ENCODE measurements at regions of chr10 and their contacts with region 1.

Region 1: GRCh38 chr10:63720072-63720537 is 198.9 kb downstream of the REEP3 start:
- DNase-seq: peak; percentile 41
- CTCF ChIP-seq: peak; percentile 85

Region 2: GRCh38 chr10:63157845-63158624 is 562.1 kb before region 1 on chr10:
- CTCF ChIA-PET with region 1: interaction called, 39 read pairs
- POLR2A ChIA-PET with region 1: no interaction called
- DNase-seq: peak; percentile 62
- CTCF ChIP-seq: peak; percentile 64

Region 3: DNA sequence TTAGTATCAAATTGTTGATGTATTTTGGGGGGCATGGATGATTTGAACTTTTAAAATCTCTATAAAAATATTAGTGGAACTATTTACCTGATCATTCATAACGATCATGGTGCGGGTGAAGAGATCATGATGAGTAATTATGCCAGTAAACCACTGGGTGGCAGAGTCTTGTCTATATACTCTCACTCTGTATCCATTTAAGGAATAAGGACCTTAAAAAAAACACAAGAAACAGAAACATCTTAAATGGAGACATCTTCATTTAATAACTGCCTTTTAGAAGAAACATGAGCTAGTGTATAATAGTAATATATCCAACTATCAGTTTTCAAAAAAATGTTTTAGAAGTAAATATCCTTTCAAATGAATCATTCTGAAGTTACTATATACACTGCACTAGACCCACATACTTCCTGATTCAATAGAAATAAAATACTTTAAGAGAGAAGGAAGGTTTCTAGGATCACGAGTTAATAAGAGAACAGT is 502.9 kb before region 1 on chr10:
- CTCF ChIA-PET with region 1: interaction called, 39 read pairs
- POLR2A ChIA-PET with region 1: no interaction called
- DNase-seq: peak; percentile 37
- CTCF ChIP-seq: peak; percentile 51

Region 4: DNA sequence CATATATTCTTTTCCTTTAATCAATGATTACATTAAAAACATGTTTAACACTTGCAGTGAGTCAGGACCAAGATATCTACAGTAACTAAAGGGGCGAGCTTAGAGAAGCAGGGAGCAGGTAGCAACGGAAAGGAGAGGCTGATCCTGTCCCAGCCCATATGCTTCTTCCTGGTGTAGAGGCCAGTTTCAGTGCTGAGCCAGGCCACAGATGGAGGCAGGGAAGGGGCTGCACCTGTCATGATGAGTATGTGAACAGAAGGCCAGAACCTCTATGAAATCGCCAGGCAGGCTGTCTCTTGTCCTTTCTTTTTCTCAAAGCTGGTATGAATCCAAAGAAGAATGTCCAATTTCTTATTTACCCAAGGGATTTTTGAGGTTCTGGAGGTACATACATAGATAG is 182.6 kb before region 1 on chr10:
- CTCF ChIA-PET with region 1: interaction called, 10 read pairs
- POLR2A ChIA-PET with region 1: no interaction called
- DNase-seq: no peak
- CTCF ChIP-seq: no peak

Region 5: DNA sequence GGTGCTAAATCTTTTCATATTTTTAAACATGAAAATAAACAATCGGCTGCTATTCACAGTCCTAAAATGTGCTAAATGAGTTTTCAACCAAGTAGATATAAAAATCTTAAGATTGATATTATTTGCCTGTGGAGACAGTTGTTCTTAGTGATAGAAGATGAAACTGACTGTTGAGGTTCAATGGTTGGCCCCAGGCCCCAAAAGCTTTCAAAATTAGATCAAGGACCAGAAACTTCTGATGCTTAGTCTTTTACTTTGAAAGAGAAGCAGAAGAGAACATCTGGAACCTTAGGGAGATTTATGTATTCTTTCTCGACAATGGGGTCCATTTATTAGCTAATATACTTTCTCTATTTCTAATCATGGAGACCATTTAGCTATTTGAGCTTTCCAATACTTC is 43.1 kb before region 1 on chr10:
- CTCF ChIA-PET with region 1: interaction called, 13 read pairs
- POLR2A ChIA-PET with region 1: no interaction called
- DNase-seq: no peak
- CTCF ChIP-seq: no peak

Region 6: GRCh38 chr10:63738410-63738809 is 18.3 kb after region 1 on chr10:
- CTCF ChIA-PET with region 1: interaction called, 21 read pairs
- POLR2A ChIA-PET with region 1: no interaction called
- DNase-seq: no peak
- CTCF ChIP-seq: no peak